Activated B cell treated with CpG ODN at 0.5 μM for 24 hours (primary cell): ENCODE measurements at regions of chr20 and their contacts with region 1.

Region 1: DNA sequence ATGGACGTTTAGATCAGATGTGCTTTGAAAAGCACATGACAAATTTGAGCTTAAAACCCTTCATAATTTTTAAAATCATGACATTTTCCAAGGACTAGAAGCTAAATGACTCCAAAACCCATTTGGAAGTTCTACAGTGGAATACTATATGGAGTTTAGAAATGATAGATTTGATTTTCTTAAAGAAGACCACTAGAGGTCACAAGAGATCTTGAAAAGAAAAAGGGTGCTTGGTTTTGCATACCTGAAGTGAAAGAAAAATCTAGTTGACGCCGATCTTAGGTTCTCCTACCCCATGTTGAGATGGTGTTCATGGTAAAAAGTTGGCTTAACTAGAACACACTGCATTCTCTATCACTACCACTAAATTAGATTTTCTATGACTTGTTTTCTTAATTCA is 31.5 kb downstream of the CFAP61 start:
- DNase-seq: no peak
- ATAC-seq: peak; percentile 54
- H3K4me3 Mint-ChIP-seq: no peak overlapping the region
- H3K27ac Mint-ChIP-seq: no peak overlapping the region
- H3K4me1 Mint-ChIP-seq: peaks cover 2% of the 10 kb centered on the region
- H3K27me3 Mint-ChIP-seq: peaks cover 11% of the 10 kb centered on the region
- CTCF ChIP-seq: peak; percentile 85

Region 2: GRCh38 chr20:20237093-20237959 is 153.5 kb after region 1 on chr20:
- CTCF ChIA-PET with region 1: interaction called, 4 read pairs
- POLR2A ChIA-PET with region 1: no interaction called
- intact Hi-C with region 1: loop called (anchors 1 kb)
- DNase-seq: no peak
- ATAC-seq: no peak
- H3K4me3 Mint-ChIP-seq: no peak overlapping the region
- H3K27ac Mint-ChIP-seq: no peak overlapping the region
- H3K4me1 Mint-ChIP-seq: no peaks in the 10 kb centered on the region
- H3K27me3 Mint-ChIP-seq: peaks cover 4% of the 10 kb centered on the region
- CTCF ChIP-seq: no peak

Region 3: GRCh38 chr20:20360464-20360863 is 276.7 kb after region 1 on chr20:
- CTCF ChIA-PET with region 1: interaction called, 4 read pairs
- POLR2A ChIA-PET with region 1: no interaction called
- intact Hi-C with region 1: loop called (anchors 1 kb)
- DNase-seq: no peak
- ATAC-seq: peak; percentile 79
- H3K4me3 Mint-ChIP-seq: no peak overlapping the region
- H3K27ac Mint-ChIP-seq: no peak overlapping the region
- H3K4me1 Mint-ChIP-seq: peaks cover 30% of the 10 kb centered on the region
- H3K27me3 Mint-ChIP-seq: peaks cover 42% of the 10 kb centered on the region
- CTCF ChIP-seq: peak; percentile 50

Region 4: DNA sequence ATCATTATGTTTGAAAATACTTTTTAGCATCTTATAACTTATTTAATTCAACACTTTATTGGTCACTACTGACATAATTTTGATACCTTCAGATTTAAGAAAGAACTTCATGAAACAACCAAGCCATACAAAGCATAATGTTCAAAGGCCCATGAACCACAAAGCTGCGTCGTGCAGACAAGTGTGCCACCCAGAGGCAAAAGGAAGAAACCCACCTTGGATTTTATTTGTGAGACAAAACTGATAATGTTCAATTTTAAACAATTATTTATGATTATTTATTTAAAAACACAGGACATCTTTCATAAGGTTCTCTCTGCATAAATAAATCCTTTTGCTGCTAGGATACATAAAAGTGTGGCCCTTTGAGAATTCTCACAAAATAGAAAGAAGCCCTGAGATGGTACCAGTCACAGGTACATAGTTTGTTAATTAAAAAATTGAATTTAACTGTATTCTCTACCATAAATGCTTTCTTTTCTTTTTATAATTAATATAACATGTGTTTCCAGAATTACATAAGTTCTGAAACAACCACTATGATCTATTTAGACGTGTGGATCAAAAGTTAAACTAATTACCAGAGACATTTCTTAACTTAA is 484.9 kb after region 1 on chr20:
- CTCF ChIA-PET with region 1: interaction called, 11 read pairs
- POLR2A ChIA-PET with region 1: no interaction called
- intact Hi-C with region 1: loop called (anchors 1 kb)
- DNase-seq: no peak
- ATAC-seq: peak; percentile 34
- H3K4me3 Mint-ChIP-seq: no peak overlapping the region
- H3K27ac Mint-ChIP-seq: no peak overlapping the region
- H3K4me1 Mint-ChIP-seq: peaks cover 2% of the 10 kb centered on the region
- H3K27me3 Mint-ChIP-seq: no peaks in the 10 kb centered on the region
- CTCF ChIP-seq: no peak

Region 5: GRCh38 chr20:20593447-20594170 is 509.8 kb after region 1 on chr20:
- CTCF ChIA-PET with region 1: interaction called, 33 read pairs
- POLR2A ChIA-PET with region 1: no interaction called
- intact Hi-C with region 1: loop called (anchors 1 kb)
- DNase-seq: no peak
- ATAC-seq: no peak
- H3K4me3 Mint-ChIP-seq: no peak overlapping the region
- H3K27ac Mint-ChIP-seq: no peak overlapping the region
- H3K4me1 Mint-ChIP-seq: no peaks in the 10 kb centered on the region
- H3K27me3 Mint-ChIP-seq: no peaks in the 10 kb centered on the region
- CTCF ChIP-seq: no peak

Region 6: GRCh38 chr20:20824924-20825584 is 741.2 kb after region 1 on chr20:
- CTCF ChIA-PET with region 1: interaction called, 5 read pairs
- POLR2A ChIA-PET with region 1: no interaction called
- intact Hi-C with region 1: loop called (anchors 2 kb)
- DNase-seq: peak; percentile 20
- ATAC-seq: peak; percentile 56
- H3K4me3 Mint-ChIP-seq: no peak overlapping the region
- H3K27ac Mint-ChIP-seq: no peak overlapping the region
- H3K4me1 Mint-ChIP-seq: peaks cover 4% of the 10 kb centered on the region
- H3K27me3 Mint-ChIP-seq: peaks cover 13% of the 10 kb centered on the region
- CTCF ChIP-seq: no peak

Region 7: GRCh38 chr20:21235484-21236445 is 1152.0 kb after region 1 on chr20:
- CTCF ChIA-PET with region 1: no interaction called
- POLR2A ChIA-PET with region 1: no interaction called
- intact Hi-C with region 1: loop called (anchors 5 kb)
- DNase-seq: no peak
- ATAC-seq: peak; percentile 58
- H3K4me3 Mint-ChIP-seq: no peak overlapping the region
- H3K27ac Mint-ChIP-seq: no peak overlapping the region
- H3K4me1 Mint-ChIP-seq: peaks cover 3% of the 10 kb centered on the region
- H3K27me3 Mint-ChIP-seq: no peaks in the 10 kb centered on the region
- CTCF ChIP-seq: peak; percentile 92